ENCODE measurements at regions of chr3 and their contacts with region 1.

Region 1: DNA sequence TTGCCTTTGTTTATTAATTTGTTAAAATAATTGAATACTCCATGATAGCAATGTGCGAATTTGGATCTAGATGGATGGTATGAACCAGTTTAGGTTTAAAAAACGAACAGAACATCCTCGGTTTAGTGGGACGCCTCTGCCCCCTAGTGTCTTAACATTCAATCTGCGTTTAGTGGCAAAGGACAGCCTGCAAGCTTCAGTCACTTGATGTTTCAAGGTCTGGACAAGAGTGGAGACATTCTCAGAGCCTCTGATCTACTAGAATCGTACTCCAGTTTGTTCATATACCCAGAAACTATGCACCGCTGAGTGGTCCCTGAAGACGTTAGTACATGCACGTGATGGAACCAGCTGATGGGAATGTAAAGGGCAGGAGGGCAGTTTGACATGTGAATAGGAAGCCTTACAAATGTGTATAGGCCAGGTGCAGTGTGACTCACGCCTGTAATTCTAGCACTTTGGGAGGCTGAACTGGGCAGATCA is 17.8 kb upstream of the ATP13A4 start:
- DNase-seq: no peak
- ATAC-seq: peak; percentile 91
- H3K4me3 ChIP-seq: no peak overlapping the region
- H3K27ac ChIP-seq: no peak overlapping the region
- H3K4me1 ChIP-seq: no peaks in the 10 kb centered on the region
- H3K27me3 ChIP-seq: no peaks in the 10 kb centered on the region
- CTCF ChIP-seq: peak; percentile 64 to 88 (median 79)
- EP300 ChIP-seq: no peak
- POLR2A ChIP-seq: no peak
- RAD21 ChIP-seq: peak; percentile 91

Region 2: DNA sequence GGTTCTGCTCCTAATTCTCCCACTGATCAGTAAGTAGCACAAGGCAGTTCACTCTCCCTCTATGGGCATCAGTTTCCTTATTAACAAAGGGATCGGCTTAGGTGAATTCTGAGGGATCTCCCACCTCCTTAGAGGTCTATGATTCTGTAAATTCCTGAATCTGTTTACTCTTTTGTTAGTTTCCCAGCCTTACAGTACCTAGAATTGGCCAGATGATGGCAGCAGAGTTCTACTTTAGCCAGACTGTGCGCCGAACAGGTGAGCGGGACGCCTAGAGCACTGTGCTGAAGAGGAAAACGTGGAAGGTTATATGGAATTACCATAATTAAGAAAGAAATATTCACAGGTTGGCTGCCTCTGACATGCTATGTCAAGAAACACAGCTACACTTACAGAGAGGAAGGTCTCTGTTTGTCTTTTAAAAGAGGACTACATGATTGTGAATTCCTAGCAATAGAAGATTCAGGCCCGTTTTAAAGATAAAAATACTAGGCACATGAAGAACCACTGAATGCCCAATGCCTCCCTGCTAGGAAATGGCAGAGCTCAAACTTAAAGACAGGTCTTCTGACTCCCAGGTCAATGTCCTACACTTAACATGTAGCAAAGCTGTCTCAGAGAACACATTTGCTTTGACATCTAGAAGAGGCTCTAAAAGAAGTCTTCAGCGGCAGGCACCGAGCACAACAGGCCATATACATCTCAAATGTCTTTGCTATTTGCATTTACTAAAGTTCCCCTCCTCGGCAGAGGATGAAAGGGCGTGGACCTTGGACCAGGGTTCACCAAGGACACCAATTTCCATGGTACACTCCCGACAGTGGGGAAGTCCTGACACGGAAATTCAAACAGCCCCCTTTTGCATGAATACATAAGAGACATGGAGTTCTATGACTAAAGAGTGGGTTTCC is 1105.0 kb before region 1 on chr3:
- CTCF ChIA-PET with region 1: interaction called, 3 read pairs
- POLR2A ChIA-PET with region 1: no interaction called
- RAD21 ChIA-PET with region 1: no interaction called
- SMC1A ChIA-PET with region 1: interaction called, 5 read pairs
- in situ Hi-C with region 1: no loop called
- intact Hi-C with region 1: loop called (anchors 5 kb)
- DNase-seq: peak; percentile 8
- ATAC-seq: peak; percentile 92
- H3K4me3 ChIP-seq: no peak overlapping the region
- H3K27ac ChIP-seq: no peak overlapping the region
- H3K4me1 ChIP-seq: no peaks in the 10 kb centered on the region
- H3K27me3 ChIP-seq: no peaks in the 10 kb centered on the region; a peak in 1 of 4 replicates
- CTCF ChIP-seq: peak; percentile 78 to 85 (median 85)
- EP300 ChIP-seq: no peak
- POLR2A ChIP-seq: no peak
- RAD21 ChIP-seq: peak; percentile 88

Region 3: GRCh38 chr3:192566706-192567290 is 1005.7 kb before region 1 on chr3:
- CTCF ChIA-PET with region 1: interaction called, 6 read pairs
- POLR2A ChIA-PET with region 1: no interaction called
- RAD21 ChIA-PET with region 1: no interaction called
- SMC1A ChIA-PET with region 1: interaction called, 4 read pairs
- in situ Hi-C with region 1: loop called (anchors 5 kb)
- intact Hi-C with region 1: loop called (anchors 1 kb)
- DNase-seq: peak; percentile 9
- ATAC-seq: peak; percentile 95
- H3K4me3 ChIP-seq: no peak overlapping the region
- H3K27ac ChIP-seq: no peak overlapping the region
- H3K4me1 ChIP-seq: no peaks in the 10 kb centered on the region; the same call in 1 of the 2 replicates
- H3K27me3 ChIP-seq: no peaks in the 10 kb centered on the region; a peak in 1 of 4 replicates
- CTCF ChIP-seq: peak; percentile 51 to 81 (median 56); a peak in 5 of 6 replicates
- EP300 ChIP-seq: no peak
- POLR2A ChIP-seq: no peak
- RAD21 ChIP-seq: peak; percentile 93

Region 4: GRCh38 chr3:193190146-193190786 is 382.2 kb before region 1 on chr3:
- CTCF ChIA-PET with region 1: interaction called, 3 read pairs
- POLR2A ChIA-PET with region 1: no interaction called
- RAD21 ChIA-PET with region 1: no interaction called
- SMC1A ChIA-PET with region 1: no interaction called
- in situ Hi-C with region 1: no loop called
- intact Hi-C with region 1: loop called (anchors 10 kb)
- DNase-seq: no peak
- ATAC-seq: peak; percentile 76
- H3K4me3 ChIP-seq: no peak overlapping the region
- H3K27ac ChIP-seq: no peak overlapping the region
- H3K4me1 ChIP-seq: no peaks in the 10 kb centered on the region
- H3K27me3 ChIP-seq: no peaks in the 10 kb centered on the region
- CTCF ChIP-seq: peak; percentile 22 to 43 (median 32); a peak in 4 of 6 replicates
- EP300 ChIP-seq: no peak
- POLR2A ChIP-seq: no peak
- RAD21 ChIP-seq: peak; percentile 46

Region 5: GRCh38 chr3:193465992-193466608 is 106.4 kb before region 1 on chr3:
- CTCF ChIA-PET with region 1: interaction called, 9 read pairs
- POLR2A ChIA-PET with region 1: no interaction called
- RAD21 ChIA-PET with region 1: interaction called, 4 read pairs
- SMC1A ChIA-PET with region 1: interaction called, 3 read pairs
- in situ Hi-C with region 1: loop called (anchors 5 kb)
- intact Hi-C with region 1: loop called (anchors 1 kb)
- DNase-seq: no peak
- ATAC-seq: no peak
- H3K4me3 ChIP-seq: no peak overlapping the region
- H3K27ac ChIP-seq: no peak overlapping the region
- H3K4me1 ChIP-seq: no peaks in the 10 kb centered on the region
- H3K27me3 ChIP-seq: no peaks in the 10 kb centered on the region
- CTCF ChIP-seq: no peak
- EP300 ChIP-seq: no peak
- POLR2A ChIP-seq: no peak
- RAD21 ChIP-seq: no peak

Region 6: GRCh38 chr3:193560910-193561317 is 11.6 kb before region 1 on chr3:
- CTCF ChIA-PET with region 1: interaction called, 10 read pairs
- POLR2A ChIA-PET with region 1: no interaction called
- RAD21 ChIA-PET with region 1: no interaction called
- SMC1A ChIA-PET with region 1: interaction called, 4 read pairs
- in situ Hi-C with region 1: no loop called
- intact Hi-C with region 1: no loop called
- DNase-seq: no peak
- ATAC-seq: no peak
- H3K4me3 ChIP-seq: no peak overlapping the region
- H3K27ac ChIP-seq: no peak overlapping the region
- H3K4me1 ChIP-seq: no peaks in the 10 kb centered on the region
- H3K27me3 ChIP-seq: no peaks in the 10 kb centered on the region
- CTCF ChIP-seq: no peak
- EP300 ChIP-seq: no peak
- POLR2A ChIP-seq: no peak
- RAD21 ChIP-seq: no peak